Sigmoid colon (tissue), 7 donors: ENCODE measurements at regions of chr3 and their contacts with region 1.

Region 1: DNA sequence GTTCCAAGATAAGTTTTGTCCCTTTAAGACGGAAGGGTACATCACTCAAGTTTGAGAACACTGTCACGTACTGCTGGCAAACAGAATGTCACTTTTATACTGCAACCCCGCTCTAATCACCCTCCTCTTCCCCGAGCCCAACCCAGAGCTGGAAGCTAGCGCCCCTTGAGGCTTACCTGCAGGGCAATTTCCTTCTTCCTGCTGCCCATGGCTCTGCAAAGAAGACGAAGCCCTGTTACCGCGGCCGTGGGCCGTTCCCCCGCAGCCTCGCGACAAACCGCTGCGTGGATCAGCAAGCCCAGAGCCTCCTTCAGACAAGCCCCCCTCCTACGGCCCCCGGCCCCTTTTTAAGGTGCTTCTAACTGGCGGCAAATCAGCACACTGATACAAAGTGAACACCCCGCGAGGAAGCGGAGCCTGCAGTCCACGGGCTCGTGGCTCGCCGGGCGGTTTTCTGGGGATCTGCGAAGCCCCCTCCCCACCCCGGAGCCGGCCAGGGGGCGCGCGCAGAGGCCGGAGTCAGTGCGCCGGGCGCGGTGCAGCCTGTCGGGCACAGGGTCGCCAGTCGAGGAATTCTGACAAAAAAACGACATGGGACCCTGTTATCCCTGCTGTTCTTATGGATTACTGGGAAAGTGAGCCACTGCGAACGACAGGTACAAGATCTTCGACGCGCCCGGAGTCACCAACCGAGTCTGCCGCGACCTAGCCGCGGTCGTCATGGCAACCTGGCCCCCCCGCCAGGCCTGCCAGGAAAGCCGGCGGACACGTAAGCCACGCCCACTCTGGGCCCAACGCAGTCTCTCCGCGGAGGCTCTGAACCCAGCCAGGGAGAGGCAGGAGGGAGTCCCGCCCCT is at the start of gene NME9:
- DNase-seq: peak; percentile 93
- H3K4me3 ChIP-seq: peak within 1 kb of the TSS; percentile 51 to 71 (median 62)
- H3K27ac ChIP-seq: peak within 1 kb of the TSS; percentile 54 to 69 (median 58)
- H3K4me1 ChIP-seq: peaks cover 0 to 16% (median 7%) of the 10 kb centered on the region in 4 donors
- H3K27me3 ChIP-seq: no peaks in the 10 kb centered on the region
- CTCF ChIP-seq: peak in 3 of 4 experiments; percentile 25 to 59 (median 54)
- EP300 ChIP-seq: no peak
- POLR2A ChIP-seq: no peak
- total RNA-seq, gene NME9: not detected

Region 2: GRCh38 chr3:138173769-138174420 is 155.5 kb before region 1 on chr3:
- intact Hi-C with region 1: no loop called
- DNase-seq: no peak
- H3K4me3 ChIP-seq: peak overlapping the region; percentile 76 to 84 (median 80)
- H3K27ac ChIP-seq: peak overlapping the region; percentile 79 to 89 (median 84)
- H3K4me1 ChIP-seq: peaks cover 0 to 28% (median 14%) of the 10 kb centered on the region in 4 donors
- H3K27me3 ChIP-seq: no peaks in the 10 kb centered on the region
- CTCF ChIP-seq: no peak
- EP300 ChIP-seq: no peak
- POLR2A ChIP-seq: no peak

Region 3: DNA sequence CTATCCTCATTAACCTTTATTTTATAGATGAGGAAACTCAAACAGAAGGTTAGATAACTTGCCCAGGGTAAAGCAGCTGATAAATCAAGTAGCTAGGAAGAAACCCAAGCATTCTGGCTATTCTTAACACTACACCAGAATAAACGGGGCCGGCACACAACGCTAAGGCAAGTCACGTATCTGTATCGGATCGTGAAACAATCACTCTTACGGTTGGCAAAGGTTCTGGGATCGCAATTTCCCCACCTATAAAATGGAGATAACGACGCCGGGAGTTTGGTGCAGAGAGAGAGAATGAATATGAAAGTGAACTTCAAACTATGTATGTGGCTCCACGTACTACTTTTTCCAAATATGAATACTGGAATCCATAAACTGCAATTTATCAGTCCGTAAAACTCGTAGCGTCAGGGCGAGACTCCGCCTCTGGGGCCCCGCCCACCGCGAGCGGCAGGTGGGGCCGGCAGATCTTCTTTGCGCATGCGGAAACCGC is 142.5 kb before region 1 on chr3:
- intact Hi-C with region 1: loop called (anchors 2 kb)
- DNase-seq: peak; percentile 96
- H3K4me3 ChIP-seq: peak overlapping the region; percentile 73 to 94 (median 87)
- H3K27ac ChIP-seq: peak overlapping the region; percentile 95 to 99 (median 97)
- H3K4me1 ChIP-seq: peaks cover 0 to 30% (median 26%) of the 10 kb centered on the region in 4 donors
- H3K27me3 ChIP-seq: no peaks in the 10 kb centered on the region
- CTCF ChIP-seq: no peak
- EP300 ChIP-seq: no peak
- POLR2A ChIP-seq: no peak

Region 4: DNA sequence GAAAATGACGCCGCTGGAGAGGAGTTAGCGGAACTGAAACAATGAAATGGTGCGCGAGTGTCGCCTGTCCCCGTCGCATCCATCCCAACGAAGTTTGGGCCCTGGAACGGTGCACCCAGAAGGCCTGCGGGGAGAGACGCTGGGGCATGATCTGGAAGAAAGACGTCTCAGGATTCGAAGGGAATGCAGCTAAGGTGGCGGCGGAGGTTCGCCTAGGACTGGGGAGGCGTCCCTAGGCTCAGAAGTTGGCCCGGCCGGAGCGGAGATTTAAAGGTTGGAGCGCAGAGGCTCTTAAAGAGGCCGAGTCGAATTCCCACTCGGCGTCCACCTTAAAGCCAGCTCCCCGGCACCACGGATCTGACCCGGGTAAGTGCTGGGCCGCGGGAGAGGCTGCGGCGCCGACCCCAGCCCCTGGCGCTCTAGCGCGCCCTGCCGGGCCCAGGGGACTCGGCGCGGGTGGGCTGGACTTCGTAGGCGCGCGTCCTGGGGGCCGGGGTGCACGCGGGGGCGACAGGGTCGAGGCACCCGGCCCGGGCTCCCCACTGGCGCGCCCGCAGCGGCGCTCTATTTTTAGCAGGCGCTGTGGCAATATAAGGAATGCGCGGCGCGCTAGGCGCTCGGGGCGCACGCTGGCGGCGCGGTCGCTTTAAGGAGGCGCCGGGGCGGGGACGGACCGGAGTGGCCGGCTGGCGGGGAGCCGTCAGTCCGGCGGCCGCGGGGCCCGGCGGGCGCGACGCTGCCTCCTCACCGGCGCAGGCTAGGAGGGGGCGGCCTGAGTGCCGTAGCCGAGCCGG is 18.8 kb after region 1 on chr3 and contains the start of gene MRAS:
- intact Hi-C with region 1: loop called (anchors 1 kb)
- DNase-seq: peak; percentile 90
- H3K4me3 ChIP-seq: peak within 1 kb of the TSS; percentile 73 to 95 (median 91)
- H3K27ac ChIP-seq: peak within 1 kb of the TSS; percentile 92 to 97 (median 96)
- H3K4me1 ChIP-seq: peaks cover 0 to 35% (median 25%) of the 10 kb centered on the region in 4 donors
- H3K27me3 ChIP-seq: no peaks in the 10 kb centered on the region
- CTCF ChIP-seq: peak in 1 of 4 experiments; percentile 38
- EP300 ChIP-seq: no peak
- POLR2A ChIP-seq: no peak
- total RNA-seq, gene MRAS: 24.4 to 36.8 (median 30.0) TPM

Region 5: DNA sequence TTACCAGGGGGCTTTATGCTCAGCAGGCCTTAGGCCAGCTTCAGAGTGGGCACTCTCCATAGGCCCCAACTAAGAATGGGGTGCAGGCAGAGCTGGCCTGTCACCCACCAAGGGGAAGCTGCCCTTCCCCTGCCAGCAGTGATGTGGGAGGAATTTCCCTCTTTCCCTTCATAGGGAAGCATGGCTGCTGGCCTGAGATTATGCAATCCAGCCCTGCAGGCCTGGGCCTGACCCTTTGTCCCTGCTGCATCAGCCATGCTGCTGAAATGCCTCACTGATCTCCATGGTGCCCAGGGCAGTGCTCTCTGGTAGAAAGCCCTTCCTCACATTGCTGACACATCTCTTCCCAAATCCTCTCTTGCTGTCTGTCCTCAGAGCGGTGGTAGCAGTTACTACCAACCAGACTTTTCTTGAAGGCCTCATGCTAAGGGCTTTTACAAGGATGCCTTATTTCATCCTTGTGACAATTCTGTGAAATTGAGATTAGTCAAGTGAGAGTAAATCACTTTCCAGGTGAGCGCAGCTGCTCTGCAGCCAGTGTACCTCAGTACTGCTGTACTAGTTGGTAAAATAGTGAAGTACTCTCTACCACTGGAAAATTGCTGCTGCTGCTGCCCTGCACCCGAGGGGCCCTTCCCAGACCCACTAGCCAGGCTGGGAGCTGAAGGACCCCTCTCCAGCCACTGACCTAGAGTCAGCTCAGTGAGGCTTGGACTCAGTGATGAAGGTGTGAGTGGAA is 52.8 kb after region 1 on chr3:
- intact Hi-C with region 1: loop called (anchors 5 kb)
- DNase-seq: peak; percentile 88
- H3K4me3 ChIP-seq: no peak overlapping the region
- H3K27ac ChIP-seq: peak overlapping the region; percentile 82 to 85 (median 83)
- H3K4me1 ChIP-seq: peaks cover 0 to 26% (median 23%) of the 10 kb centered on the region in 4 donors
- H3K27me3 ChIP-seq: no peaks in the 10 kb centered on the region
- CTCF ChIP-seq: no peak
- EP300 ChIP-seq: no peak
- POLR2A ChIP-seq: no peak

Region 6: GRCh38 chr3:138434276-138434874 is 105.0 kb after region 1 on chr3 and contains the start of gene ESYT3:
- intact Hi-C with region 1: loop called (anchors 5 kb)
- DNase-seq: peak; percentile 85
- H3K4me3 ChIP-seq: peak within 1 kb of the TSS; percentile 46 to 68 (median 63)
- H3K27ac ChIP-seq: peak within 1 kb of the TSS in 3 of 4 donors; percentile 68 to 78 (median 72)
- H3K4me1 ChIP-seq: peaks cover 0 to 29% (median 23%) of the 10 kb centered on the region in 4 donors
- H3K27me3 ChIP-seq: peaks cover 0 to 7% (median 0%) of the 10 kb centered on the region in 3 donors
- CTCF ChIP-seq: no peak
- EP300 ChIP-seq: no peak
- POLR2A ChIP-seq: peak in 1 of 2 donors; percentile 32
- total RNA-seq, gene ESYT3: 15.1 to 19.4 (median 17.2) TPM

Region 7: GRCh38 chr3:138812806-138813205 is 483.5 kb after region 1 on chr3:
- intact Hi-C with region 1: no loop called
- DNase-seq: no peak
- H3K4me3 ChIP-seq: no peak overlapping the region
- H3K27ac ChIP-seq: no peak overlapping the region
- H3K4me1 ChIP-seq: no peaks in the 10 kb centered on the region
- H3K27me3 ChIP-seq: no peaks in the 10 kb centered on the region
- CTCF ChIP-seq: no peak
- EP300 ChIP-seq: no peak
- POLR2A ChIP-seq: no peak